Psoas muscle (tissue), 8 donors: ENCODE measurements at regions of chr17 and their contacts with region 1.

Region 1: GRCh38 chr17:50956750-50957523 is 90.8 kb upstream of the TOB1 start:
- DNase-seq: peak; percentile 61 to 82
- ATAC-seq: peak; percentile 34 to 59 (median 44)
- H3K4me3 ChIP-seq: no peak overlapping the region
- H3K27ac ChIP-seq: peak overlapping the region; percentile 98
- H3K4me1 ChIP-seq: peaks cover 45% of the 10 kb centered on the region
- H3K27me3 ChIP-seq: no peaks in the 10 kb centered on the region
- CTCF ChIP-seq: peak; percentile 76

Region 2: DNA sequence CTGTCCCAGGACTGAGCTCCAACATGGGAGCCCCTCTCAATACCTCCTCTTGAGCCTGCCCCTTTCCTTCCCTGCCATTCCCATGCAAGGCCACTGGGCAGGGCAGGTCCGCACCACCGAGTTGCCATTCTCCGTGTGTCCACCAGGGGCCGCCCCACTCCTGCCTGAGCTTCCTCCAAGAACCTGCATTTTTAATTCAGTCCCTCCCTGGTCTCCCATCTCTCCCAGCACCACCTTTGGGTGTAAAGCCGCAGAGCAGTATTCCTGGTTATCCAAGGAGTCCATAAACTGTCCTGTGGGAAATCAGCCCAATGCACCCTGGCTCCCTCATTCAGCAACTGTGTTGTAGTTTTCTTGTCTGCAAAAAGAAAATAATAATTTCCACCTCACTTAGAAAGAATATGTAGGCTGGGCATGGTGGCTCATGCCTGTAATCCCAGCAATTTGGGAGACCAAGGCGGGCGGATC is 173.7 kb before region 1 on chr17:
- intact Hi-C with region 1: loop called (anchors 2 to 5 kb)
- DNase-seq: peak; percentile 82 to 91
- ATAC-seq: peak; percentile 93 to 96 (median 95)
- H3K4me3 ChIP-seq: no peak overlapping the region
- H3K27ac ChIP-seq: no peak overlapping the region
- H3K4me1 ChIP-seq: no peaks in the 10 kb centered on the region
- H3K27me3 ChIP-seq: no peaks in the 10 kb centered on the region
- CTCF ChIP-seq: peak; percentile 96

Region 3: GRCh38 chr17:50853015-50853615 is 103.8 kb before region 1 on chr17:
- intact Hi-C with region 1: loop called in 1 of 2 experiments (anchors 1 kb)
- DNase-seq: no peak
- ATAC-seq: no peak
- H3K4me3 ChIP-seq: no peak overlapping the region
- H3K27ac ChIP-seq: peak overlapping the region; percentile 95
- H3K4me1 ChIP-seq: peaks cover 49% of the 10 kb centered on the region
- H3K27me3 ChIP-seq: no peaks in the 10 kb centered on the region
- CTCF ChIP-seq: no peak

Region 4: GRCh38 chr17:50986989-50987660 is 30.2 kb after region 1 on chr17:
- intact Hi-C with region 1: no loop called
- DNase-seq: no peak
- ATAC-seq: peak in 1 of 4 donors; percentile 25
- H3K4me3 ChIP-seq: no peak overlapping the region
- H3K27ac ChIP-seq: no peak overlapping the region
- H3K4me1 ChIP-seq: no peaks in the 10 kb centered on the region
- H3K27me3 ChIP-seq: no peaks in the 10 kb centered on the region
- CTCF ChIP-seq: no peak